Motor neuron (in vitro differentiated cells): ENCODE measurements at regions of chr7 and their contacts with region 1.

Region 1: DNA sequence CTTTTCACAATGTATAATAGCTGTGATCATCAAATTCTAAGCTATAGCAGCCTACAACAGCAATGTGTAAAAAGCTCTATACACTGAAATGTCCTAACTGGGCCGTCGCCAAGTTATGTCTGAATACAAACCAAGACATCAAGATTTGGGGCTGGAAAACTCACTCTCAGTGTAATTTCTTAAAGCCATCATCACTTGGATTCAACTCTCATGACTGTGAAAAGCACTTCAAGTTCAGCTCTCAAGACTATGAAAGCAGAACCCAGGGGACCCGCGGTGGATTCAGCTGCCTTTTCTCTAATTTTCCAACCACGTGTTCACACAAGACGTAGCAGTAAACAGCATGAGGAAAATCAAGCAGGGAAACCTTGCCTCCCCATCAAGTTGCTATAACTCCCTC is 15.8 kb upstream of the ZNRF2 start:
- ATAC-seq: no peak
- H3K4me3 ChIP-seq: no peak overlapping the region
- H3K27ac ChIP-seq: no peak overlapping the region
- H3K4me1 ChIP-seq: no peaks in the 10 kb centered on the region

Region 2: DNA sequence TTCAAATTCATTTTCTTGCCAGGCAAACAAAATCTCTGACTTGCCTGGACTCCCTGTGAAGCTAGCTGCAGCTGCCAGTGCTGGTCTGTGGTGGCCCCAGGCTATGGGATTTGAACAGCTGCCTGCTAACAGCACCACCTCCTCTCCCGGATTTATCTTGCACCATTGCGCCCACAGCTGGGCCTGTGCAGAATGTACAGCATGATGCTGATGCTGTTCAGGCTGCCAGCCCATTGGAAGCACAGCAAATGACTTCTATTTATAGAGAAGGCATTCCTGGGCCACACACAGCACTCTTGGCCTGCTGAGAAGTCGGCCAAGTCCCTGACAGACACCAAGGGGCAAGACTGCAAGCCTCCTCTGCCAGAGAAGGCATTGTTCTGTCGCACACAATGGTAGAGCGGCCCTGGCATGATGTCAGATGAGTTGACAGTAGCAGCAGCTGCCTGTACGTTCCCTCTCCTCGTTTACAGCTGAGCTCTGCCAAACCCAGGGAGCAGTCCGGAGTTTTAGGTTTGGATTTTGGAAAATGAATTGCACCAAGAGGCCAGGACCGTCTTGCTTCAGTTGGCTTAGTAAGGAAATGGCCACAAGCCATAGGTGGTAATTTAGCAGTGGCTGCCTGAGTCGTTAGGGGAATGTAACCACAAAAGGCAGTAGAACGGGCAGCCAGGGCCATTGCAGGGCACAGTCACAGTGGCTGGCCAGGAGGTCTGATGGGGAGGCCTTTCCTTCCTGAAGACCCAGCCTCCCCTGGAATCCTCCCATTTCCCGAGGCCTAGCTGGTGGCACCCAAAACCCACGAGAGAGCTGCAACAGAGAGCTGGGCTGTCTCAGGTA is 95.3 kb before region 1 on chr7:
- in situ Hi-C with region 1: loop called in 1 of 9 experiments (anchors 10 kb)
- ATAC-seq: peak; percentile 65 to 89 (median 81)
- H3K4me3 ChIP-seq: no peak overlapping the region
- H3K27ac ChIP-seq: no peak overlapping the region
- H3K4me1 ChIP-seq: peaks cover 13 to 16% of the 10 kb centered on the region in 2 donors